ENCODE measurements at regions of chr4 and their contacts with region 1.

Region 1: GRCh38 chr4:5256421-5256820 is 205.1 kb downstream of the STK32B start:
- DNase-seq: no peak
- ATAC-seq: no peak
- H3K4me3 ChIP-seq: no peak overlapping the region
- H3K4me3 Mint-ChIP-seq: no peak overlapping the region
- H3K27ac ChIP-seq: no peak overlapping the region
- H3K27ac Mint-ChIP-seq: no peak overlapping the region
- H3K4me1 ChIP-seq: no peaks in the 10 kb centered on the region
- H3K4me1 Mint-ChIP-seq: no peaks in the 10 kb centered on the region
- H3K27me3 ChIP-seq: no peaks in the 10 kb centered on the region
- H3K27me3 Mint-ChIP-seq: peaks cover 1% of the 10 kb centered on the region
- CTCF ChIP-seq: no peak

Region 2: DNA sequence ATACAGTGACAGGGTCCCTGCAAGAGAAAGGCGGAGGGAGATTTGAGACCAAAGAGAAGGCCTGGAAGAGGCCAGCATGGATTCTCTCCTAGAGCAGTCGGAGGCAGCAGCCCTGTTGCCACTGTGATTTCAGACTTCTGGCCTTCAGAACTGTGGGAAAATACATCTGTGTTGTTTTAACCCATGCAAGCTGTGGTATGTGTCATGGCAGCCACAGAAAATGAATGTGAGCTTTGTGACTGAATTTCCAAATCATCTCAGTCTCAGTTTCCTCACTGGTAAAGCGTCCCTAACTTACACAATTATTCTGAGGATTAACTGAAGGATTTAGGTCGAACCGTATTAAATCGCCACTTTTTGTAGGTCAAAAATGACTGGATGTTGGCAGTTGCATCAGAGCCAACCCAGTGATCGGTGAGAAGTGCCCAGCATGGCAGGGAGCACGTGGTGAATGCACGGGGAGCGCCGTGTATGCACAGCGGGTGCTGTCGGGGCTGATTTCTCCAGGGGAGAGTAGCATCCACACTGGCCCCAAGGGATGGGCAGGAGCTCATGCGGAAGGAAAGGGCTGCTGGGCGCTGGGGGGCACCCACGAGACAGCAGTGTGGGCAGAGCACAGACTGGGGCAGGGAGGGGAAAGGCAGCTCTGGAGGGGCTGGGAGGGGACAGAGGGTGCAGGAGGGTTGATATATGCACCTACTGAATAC is 893.3 kb before region 1 on chr4:
- CTCF ChIA-PET with region 1: no interaction called
- POLR2A ChIA-PET with region 1: no interaction called
- intact Hi-C with region 1: loop called in 1 of 2 experiments (anchors 10 kb)
- DNase-seq: no peak
- ATAC-seq: no peak
- H3K4me3 ChIP-seq: no peak overlapping the region
- H3K4me3 Mint-ChIP-seq: no peak overlapping the region
- H3K27ac ChIP-seq: no peak overlapping the region
- H3K27ac Mint-ChIP-seq: no peak overlapping the region
- H3K4me1 ChIP-seq: no peaks in the 10 kb centered on the region
- H3K4me1 Mint-ChIP-seq: no peaks in the 10 kb centered on the region
- H3K27me3 ChIP-seq: no peaks in the 10 kb centered on the region
- H3K27me3 Mint-ChIP-seq: no peaks in the 10 kb centered on the region
- CTCF ChIP-seq: no peak

Measured in CD4-positive, alpha-beta T cell (primary cell).